ENCODE measurements at regions of chr4 and their contacts with region 1.

Region 1: GRCh38 chr4:112327965-112328733 is 31.0 kb downstream of the ALPK1 start:
- DNase-seq: peak; percentile 72
- ATAC-seq: peak; percentile 83
- H3K4me3 ChIP-seq: no peak overlapping the region
- H3K27ac ChIP-seq: no peak overlapping the region
- H3K4me1 ChIP-seq: no peaks in the 10 kb centered on the region
- H3K27me3 ChIP-seq: no peaks in the 10 kb centered on the region
- CTCF ChIP-seq: peak; percentile 74
- POLR2A ChIP-seq: no peak
- RAD21 ChIP-seq: peak; percentile 83

Region 2: DNA sequence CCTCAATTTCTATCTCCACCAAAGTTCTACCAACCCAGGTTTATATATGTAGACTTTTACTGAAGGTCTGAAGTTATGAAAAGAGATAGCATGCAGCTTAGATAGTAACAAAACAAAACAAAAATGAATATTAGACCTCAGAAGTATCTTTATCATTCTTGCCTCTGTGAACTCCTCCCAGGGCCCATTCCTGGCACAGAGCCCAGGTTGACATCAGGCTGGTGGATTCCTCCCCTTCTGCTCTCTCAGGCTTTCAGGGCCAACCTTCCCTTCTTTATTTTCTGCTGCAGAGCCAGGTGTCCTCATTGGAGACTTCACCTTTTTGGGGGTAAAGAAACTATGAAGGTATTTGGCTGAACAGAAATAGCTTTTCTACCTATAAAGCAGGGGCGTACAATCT is 1592.5 kb before region 1 on chr4:
- CTCF ChIA-PET with region 1: no interaction called
- POLR2A ChIA-PET with region 1: no interaction called
- dilution Hi-C with region 1: no loop called
- in situ Hi-C with region 1: no loop called
- intact Hi-C with region 1: no loop called
- DNase-seq: peak; percentile 33
- ATAC-seq: no peak
- H3K4me3 ChIP-seq: no peak overlapping the region
- H3K27ac ChIP-seq: no peak overlapping the region
- H3K4me1 ChIP-seq: 0 out of 2 replicates have a peak, but pooled peaks cover 1% of the 10 kb centered on the region
- H3K27me3 ChIP-seq: no peaks in the 10 kb centered on the region
- CTCF ChIP-seq: no peak
- POLR2A ChIP-seq: no peak
- RAD21 ChIP-seq: no peak

Region 3: DNA sequence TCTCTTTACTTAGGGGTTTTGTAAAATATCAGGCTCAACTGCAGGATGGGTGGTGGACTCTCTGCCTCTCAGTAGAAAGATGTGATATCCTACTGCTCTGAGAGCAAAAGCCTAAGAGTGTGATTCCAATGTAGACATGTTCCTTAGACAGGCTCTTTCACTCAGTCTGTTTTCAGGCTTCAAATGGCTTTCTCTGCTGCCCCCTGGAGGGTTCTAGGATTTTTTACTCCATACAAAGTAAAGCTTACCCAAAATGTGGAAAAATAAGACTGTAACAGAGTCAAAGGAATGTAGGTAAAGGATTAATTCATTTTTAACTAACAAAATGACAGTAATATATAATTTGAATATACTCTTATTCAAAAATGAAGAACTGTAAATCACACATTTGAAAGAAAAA is 276.4 kb after region 1 on chr4:
- CTCF ChIA-PET with region 1: interaction called, 6 read pairs
- POLR2A ChIA-PET with region 1: no interaction called
- dilution Hi-C with region 1: loop called (anchors 25 kb)
- in situ Hi-C with region 1: loop called (anchors 5 kb)
- intact Hi-C with region 1: loop called (anchors 1 kb)
- DNase-seq: peak; percentile 65
- ATAC-seq: peak; percentile 99
- H3K4me3 ChIP-seq: no peak overlapping the region
- H3K27ac ChIP-seq: no peak overlapping the region
- H3K4me1 ChIP-seq: no peaks in the 10 kb centered on the region
- H3K27me3 ChIP-seq: no peaks in the 10 kb centered on the region
- CTCF ChIP-seq: peak; percentile 73
- POLR2A ChIP-seq: no peak
- RAD21 ChIP-seq: peak; percentile 80